Esophagus muscularis mucosa (tissue), 4 donors: ENCODE measurements at regions of chr3 and their contacts with region 1.

Region 1: GRCh38 chr3:11236595-11237461 is 35.4 kb upstream of the ATG7 start:
- DNase-seq: no peak
- H3K4me3 ChIP-seq: no peak overlapping the region
- H3K27ac ChIP-seq: peak overlapping the region in 3 of 4 donors; percentile 13 to 62 (median 30)
- H3K4me1 ChIP-seq: no peaks in the 10 kb centered on the region
- H3K27me3 ChIP-seq: peaks cover 0 to 7% (median 0%) of the 10 kb centered on the region in 4 donors
- CTCF ChIP-seq: peak; percentile 35 to 73 (median 60)
- EP300 ChIP-seq: no peak
- POLR2A ChIP-seq: no peak

Region 2: GRCh38 chr3:10370429-10370828 is 866.4 kb before region 1 on chr3:
- intact Hi-C with region 1: no loop called
- DNase-seq: no peak
- H3K4me3 ChIP-seq: no peak overlapping the region
- H3K27ac ChIP-seq: no peak overlapping the region
- H3K4me1 ChIP-seq: no peaks in the 10 kb centered on the region
- H3K27me3 ChIP-seq: peaks cover 0 to 1% (median 0%) of the 10 kb centered on the region in 4 donors
- CTCF ChIP-seq: no peak
- EP300 ChIP-seq: no peak
- POLR2A ChIP-seq: no peak

Region 3: DNA sequence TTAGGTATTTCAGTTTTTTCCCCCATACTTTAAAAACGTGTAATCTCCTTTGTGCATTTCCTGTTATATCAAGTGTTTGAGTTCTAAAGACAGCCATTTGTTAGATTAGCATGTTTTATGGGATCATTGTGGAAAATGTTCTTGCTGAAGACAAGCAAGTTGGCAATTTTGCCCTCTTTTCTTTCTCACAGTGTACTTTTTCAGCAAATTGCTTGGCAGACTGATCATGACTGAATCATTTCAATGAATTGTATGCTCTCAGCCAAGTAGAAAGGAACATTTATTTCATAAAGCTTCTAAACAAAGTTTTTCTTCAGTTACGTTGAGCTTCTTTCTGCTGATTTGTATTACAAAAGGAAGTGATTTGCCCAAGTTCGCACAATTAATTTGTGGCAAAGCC is 87.0 kb after region 1 on chr3:
- intact Hi-C with region 1: loop called (anchors 10 kb)
- DNase-seq: no peak
- H3K4me3 ChIP-seq: no peak overlapping the region
- H3K27ac ChIP-seq: peak overlapping the region; percentile 11 to 54 (median 33)
- H3K4me1 ChIP-seq: peaks cover 0 to 18% (median 8%) of the 10 kb centered on the region in 4 donors
- H3K27me3 ChIP-seq: no peaks in the 10 kb centered on the region
- CTCF ChIP-seq: no peak
- EP300 ChIP-seq: no peak
- POLR2A ChIP-seq: no peak